ENCODE measurements at regions of chr18 and their contacts with region 1.

Region 1: DNA sequence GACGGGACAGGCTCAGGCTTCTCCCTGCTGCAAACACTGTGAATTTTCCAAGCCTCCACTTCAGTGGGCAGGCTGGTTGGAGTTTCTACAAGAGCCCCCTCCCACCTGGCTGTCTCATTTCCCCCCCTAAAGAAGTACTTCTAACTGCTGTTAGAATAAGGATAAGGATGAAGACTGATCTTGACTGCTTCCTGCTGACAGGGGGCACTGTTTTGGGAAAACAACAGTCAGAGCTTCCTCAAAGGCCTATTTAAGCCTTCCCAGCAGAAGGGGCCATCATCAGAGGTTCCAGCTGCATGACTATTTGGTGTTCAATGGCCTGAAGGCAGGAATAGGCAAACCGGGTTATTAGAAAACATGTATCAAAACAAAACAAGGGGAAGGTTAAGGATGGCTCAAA is 1162.8 kb downstream of the DSC3 start:
- DNase-seq: no peak
- H3K4me3 ChIP-seq: no peak overlapping the region
- H3K27ac ChIP-seq: no peak overlapping the region
- H3K4me1 ChIP-seq: no peaks in the 10 kb centered on the region
- H3K27me3 ChIP-seq: no peaks in the 10 kb centered on the region
- CTCF ChIP-seq: no peak
- POLR2A ChIP-seq: no peak

Region 2: DNA sequence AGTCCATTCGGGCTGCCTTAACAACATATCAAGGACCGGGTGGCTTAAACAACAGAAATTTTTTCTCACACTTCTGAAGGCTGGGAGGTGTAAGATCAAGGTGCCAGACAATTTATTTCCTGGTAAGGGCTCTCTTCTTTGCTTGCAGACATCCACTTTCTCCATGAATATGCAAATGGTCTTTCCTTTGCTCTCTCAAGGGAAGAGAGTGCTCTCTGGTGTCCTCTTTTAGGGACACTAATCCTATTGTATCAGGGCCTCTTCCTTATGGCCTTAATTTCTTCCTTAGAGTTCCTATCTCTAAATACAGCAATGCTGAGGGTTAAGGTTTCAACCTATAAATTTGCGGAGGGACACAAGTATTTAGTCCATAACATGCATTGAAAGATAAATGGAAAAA is 392.0 kb after region 1 on chr18:
- intact Hi-C with region 1: loop called (anchors 5 kb)
- DNase-seq: no peak
- H3K4me3 ChIP-seq: no peak overlapping the region
- H3K27ac ChIP-seq: no peak overlapping the region
- H3K4me1 ChIP-seq: no peaks in the 10 kb centered on the region
- H3K27me3 ChIP-seq: no peaks in the 10 kb centered on the region
- CTCF ChIP-seq: no peak
- POLR2A ChIP-seq: no peak